ENCODE measurements at regions of chr6 and their contacts with region 1.

Region 1: GRCh38 chr6:53103992-53104675 is 38.9 kb downstream of the FBXO9 start:
- DNase-seq: peak; percentile 74
- ATAC-seq: peak; percentile 83
- H3K4me3 ChIP-seq: no peak overlapping the region
- H3K27ac ChIP-seq: no peak overlapping the region
- H3K4me1 ChIP-seq: peaks cover 10% of the 10 kb centered on the region; the same call in 1 of the 2 replicates
- H3K27me3 ChIP-seq: no peaks in the 10 kb centered on the region
- CTCF ChIP-seq: peak; percentile 71
- EP300 ChIP-seq: no peak
- POLR2A ChIP-seq: no peak
- RAD21 ChIP-seq: peak; percentile 36; the same call in 1 of the 2 replicates

Region 2: DNA sequence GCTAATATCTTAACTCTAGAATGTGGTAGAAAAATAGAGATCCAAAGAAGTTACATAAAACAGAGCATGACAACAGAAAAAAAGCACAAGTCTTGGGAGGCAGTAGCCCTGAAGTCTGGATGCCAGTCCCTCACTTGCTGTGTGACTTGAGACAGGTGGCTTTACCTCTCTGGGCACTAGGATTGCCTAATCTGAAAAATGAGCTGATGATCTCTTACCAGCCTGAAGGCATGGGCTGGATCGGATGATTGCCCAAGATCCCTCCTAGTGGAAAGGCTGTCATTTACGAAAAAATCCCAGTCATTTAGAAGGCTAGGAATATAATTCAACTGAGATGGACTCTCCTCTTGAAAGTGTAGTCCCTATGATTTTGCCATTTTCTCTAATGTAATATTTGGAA is 55.4 kb after region 1 on chr6:
- CTCF ChIA-PET with region 1: no interaction called
- POLR2A ChIA-PET with region 1: no interaction called
- in situ Hi-C with region 1: no loop called
- intact Hi-C with region 1: loop called (anchors 1 kb)
- DNase-seq: peak; percentile 33
- ATAC-seq: peak; percentile 52
- H3K4me3 ChIP-seq: no peak overlapping the region
- H3K27ac ChIP-seq: no peak overlapping the region
- H3K4me1 ChIP-seq: peaks cover 4% of the 10 kb centered on the region; the same call in 1 of the 2 replicates
- H3K27me3 ChIP-seq: no peaks in the 10 kb centered on the region
- CTCF ChIP-seq: no peak
- EP300 ChIP-seq: no peak
- POLR2A ChIP-seq: no peak
- RAD21 ChIP-seq: no peak

Region 3: GRCh38 chr6:53294095-53294494 is 190.0 kb after region 1 on chr6:
- CTCF ChIA-PET with region 1: no interaction called
- POLR2A ChIA-PET with region 1: no interaction called
- in situ Hi-C with region 1: loop called (anchors 5 kb)
- intact Hi-C with region 1: no loop called
- DNase-seq: peak; percentile 31
- ATAC-seq: peak; percentile 69
- H3K4me3 ChIP-seq: no peak overlapping the region
- H3K27ac ChIP-seq: no peak overlapping the region
- H3K4me1 ChIP-seq: peaks cover 14% of the 10 kb centered on the region
- H3K27me3 ChIP-seq: no peaks in the 10 kb centered on the region
- CTCF ChIP-seq: peak; percentile 71
- EP300 ChIP-seq: no peak
- POLR2A ChIP-seq: no peak
- RAD21 ChIP-seq: no peak

Region 4: DNA sequence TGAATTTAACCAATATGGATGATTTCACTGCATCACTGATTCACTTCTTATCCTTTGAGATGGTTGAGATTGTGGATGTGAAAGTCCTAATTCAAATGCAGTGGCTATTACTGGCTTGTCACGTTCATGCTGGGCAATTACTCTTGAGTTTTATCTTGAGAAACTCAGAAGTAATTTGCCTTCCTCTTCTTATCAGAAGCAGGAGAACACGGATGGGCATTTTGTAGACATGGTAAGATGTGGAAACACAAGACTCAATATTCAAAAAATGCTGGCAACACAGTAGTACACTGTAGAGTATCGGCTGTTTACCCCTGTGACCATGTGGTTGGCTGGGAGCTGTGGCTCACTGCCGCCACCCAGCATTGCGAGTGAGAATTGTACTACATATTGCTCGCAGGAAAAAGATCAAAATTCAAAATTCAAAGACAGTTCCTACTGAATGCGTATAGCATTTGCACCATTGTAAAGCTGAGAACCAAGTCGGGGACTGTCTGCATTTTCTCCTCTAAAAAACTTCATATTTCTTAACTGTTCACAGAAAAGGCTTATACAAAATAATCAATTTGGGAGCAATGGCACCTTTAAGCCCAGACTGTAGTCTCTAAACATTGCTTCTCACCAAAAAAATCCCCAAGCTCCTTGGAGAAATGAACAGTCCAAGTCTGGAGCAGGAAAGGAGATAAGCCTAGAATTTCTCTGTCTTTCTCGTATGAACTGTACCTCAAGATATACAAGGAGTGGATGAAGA is 306.5 kb after region 1 on chr6:
- CTCF ChIA-PET with region 1: no interaction called
- POLR2A ChIA-PET with region 1: no interaction called
- in situ Hi-C with region 1: no loop called
- intact Hi-C with region 1: loop called (anchors 1 kb)
- DNase-seq: peak; percentile 56
- ATAC-seq: peak; percentile 100
- H3K4me3 ChIP-seq: no peak overlapping the region
- H3K27ac ChIP-seq: no peak overlapping the region
- H3K4me1 ChIP-seq: peaks cover 4% of the 10 kb centered on the region; the same call in 1 of the 2 replicates
- H3K27me3 ChIP-seq: peaks cover 0 to 4% of the 10 kb centered on the region in 2 experiments; a peak in 1 of 5 replicates
- CTCF ChIP-seq: peak; percentile 96
- EP300 ChIP-seq: no peak
- POLR2A ChIP-seq: no peak
- RAD21 ChIP-seq: peak; percentile 94

Region 5: GRCh38 chr6:53437557-53438202 is 333.5 kb after region 1 on chr6:
- CTCF ChIA-PET with region 1: no interaction called
- POLR2A ChIA-PET with region 1: no interaction called
- in situ Hi-C with region 1: no loop called
- intact Hi-C with region 1: loop called (anchors 2 kb)
- DNase-seq: peak; percentile 71
- ATAC-seq: peak; percentile 79
- H3K4me3 ChIP-seq: no peak overlapping the region
- H3K27ac ChIP-seq: no peak overlapping the region
- H3K4me1 ChIP-seq: peaks cover 27% of the 10 kb centered on the region
- H3K27me3 ChIP-seq: 0 out of 5 replicates have a peak, but pooled peaks cover 0 to 5% of the 10 kb centered on the region in 2 experiments
- CTCF ChIP-seq: peak; percentile 88
- EP300 ChIP-seq: no peak
- POLR2A ChIP-seq: no peak
- RAD21 ChIP-seq: peak; percentile 90

Measured in HepG2 (cell line).